PC-3 (cell line): ENCODE measurements at regions of chr2 and their contacts with region 1.

Region 1: DNA sequence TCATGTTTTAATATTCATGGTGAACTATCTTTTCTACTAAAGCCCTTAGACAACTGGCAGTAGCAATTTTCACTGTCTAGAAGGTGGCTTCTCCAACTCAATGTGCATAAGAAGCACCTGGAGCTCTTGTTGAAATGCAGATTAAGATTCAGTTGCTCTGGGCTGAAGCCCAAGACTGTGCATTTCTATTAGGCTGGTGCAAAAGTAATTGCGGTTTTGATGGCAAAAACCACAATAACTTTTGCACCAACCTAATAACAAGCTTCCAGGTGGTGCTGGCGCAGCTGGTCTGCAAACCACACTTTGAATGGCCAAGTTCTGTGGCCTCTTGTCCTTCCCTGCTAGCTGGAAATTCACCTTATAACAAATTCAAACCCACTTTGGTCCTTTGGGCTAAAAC is 26.7 kb upstream of the VPS54 start:
- DNase-seq: no peak
- ATAC-seq: no peak
- H3K4me3 ChIP-seq: no peak overlapping the region
- H3K27ac ChIP-seq: no peak overlapping the region
- H3K4me1 ChIP-seq: peaks cover 4% of the 10 kb centered on the region; the same call in 1 of the 2 replicates
- H3K27me3 ChIP-seq: no peaks in the 10 kb centered on the region
- CTCF ChIP-seq: no peak

Region 2: DNA sequence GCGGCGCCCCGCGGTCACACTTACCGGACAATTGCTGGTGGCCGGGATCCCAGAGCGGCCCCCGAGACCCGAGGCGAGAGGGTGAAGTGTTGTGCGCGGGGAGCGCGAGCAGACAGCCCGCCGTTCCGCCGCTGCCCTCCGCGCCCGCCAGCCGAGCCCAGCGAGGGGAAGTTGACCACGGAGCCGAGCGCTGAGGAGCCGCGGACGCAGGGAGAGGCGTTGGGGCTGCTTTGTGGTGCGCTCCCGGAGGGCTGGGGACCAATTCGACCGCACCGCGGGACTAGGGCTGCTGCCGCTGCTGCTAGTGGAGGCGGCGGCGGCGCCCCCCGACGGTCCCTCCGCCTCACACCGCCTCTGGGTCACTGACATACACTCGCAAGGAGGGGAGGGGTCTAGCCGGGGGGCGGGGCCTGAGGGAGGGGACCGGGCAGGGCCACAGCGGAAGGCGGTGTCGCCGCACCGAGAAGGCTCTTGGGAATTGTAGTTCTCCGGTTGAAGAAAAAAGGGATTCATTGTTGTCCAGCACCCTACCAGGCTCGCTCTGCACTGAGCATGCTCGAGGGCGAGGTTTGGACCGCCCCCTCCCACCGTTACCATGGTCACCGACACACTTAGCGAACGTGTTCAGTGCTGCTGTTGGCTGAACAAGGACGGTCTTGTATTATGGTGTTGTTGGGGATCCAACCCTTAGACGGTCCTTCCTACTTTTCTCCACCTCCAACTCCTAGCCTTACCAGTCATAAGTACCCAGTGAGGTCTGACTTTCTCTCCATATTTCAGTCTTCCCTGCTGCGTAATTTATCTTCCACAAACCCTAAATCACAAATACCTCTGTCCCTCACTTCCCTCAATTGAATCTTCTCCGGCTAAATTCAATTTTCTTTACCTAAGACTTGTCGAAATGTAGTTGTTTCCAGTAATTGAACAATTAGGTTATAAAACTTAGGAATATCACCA is 98.4 kb after region 1 on chr2 and contains the start of gene PELI1:
- CTCF ChIA-PET with region 1: no interaction called
- POLR2A ChIA-PET with region 1: no interaction called
- intact Hi-C with region 1: loop called (anchors 5 kb)
- DNase-seq: peak; percentile 97
- ATAC-seq: peak; percentile 89
- H3K4me3 ChIP-seq: peak within 1 kb of the TSS; percentile 90
- H3K27ac ChIP-seq: no peak within 1 kb of the TSS
- H3K4me1 ChIP-seq: peaks cover 18% of the 10 kb centered on the region; the same call in 1 of the 2 replicates
- H3K27me3 ChIP-seq: no peaks in the 10 kb centered on the region
- CTCF ChIP-seq: peak; percentile 21; the same call in 1 of the 2 replicates
- total RNA-seq, gene PELI1: 5.6 and 10.4 TPM in 2 replicates

Region 3: DNA sequence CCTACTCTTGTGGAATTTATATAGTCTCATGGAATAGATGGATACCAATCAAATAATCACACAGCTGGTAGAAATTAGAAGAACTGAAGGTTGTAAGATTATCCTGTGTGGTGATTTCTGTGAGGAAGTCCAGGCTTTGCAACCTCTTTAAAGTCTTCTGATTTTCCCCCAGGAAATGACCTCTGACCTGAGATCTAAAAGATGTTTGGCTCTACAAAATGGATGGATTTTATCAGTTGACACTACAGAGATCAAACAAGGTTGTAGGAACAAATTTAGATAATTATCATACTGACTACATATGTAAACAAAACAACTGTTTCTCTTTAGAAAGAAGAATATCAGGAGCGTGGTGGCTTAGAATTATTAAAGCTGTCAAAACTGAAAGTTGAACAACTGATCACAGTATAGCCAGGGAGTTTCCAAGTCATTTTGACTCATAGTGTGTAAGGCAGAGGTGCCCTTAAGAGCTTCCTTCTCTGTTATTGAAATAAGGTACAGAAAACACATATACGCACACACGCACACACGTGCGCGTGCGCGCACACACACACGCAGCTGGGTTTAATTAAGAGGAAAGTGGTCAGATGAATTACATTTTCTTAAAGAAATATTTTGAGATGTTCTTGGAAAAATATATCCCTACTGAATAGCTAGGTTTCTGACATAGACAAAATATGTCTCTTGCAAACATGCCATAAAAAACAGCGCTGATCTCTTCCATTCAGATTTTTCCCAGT is 133.8 kb after region 1 on chr2:
- CTCF ChIA-PET with region 1: no interaction called
- POLR2A ChIA-PET with region 1: no interaction called
- intact Hi-C with region 1: no loop called
- DNase-seq: no peak
- ATAC-seq: no peak
- H3K4me3 ChIP-seq: no peak overlapping the region
- H3K27ac ChIP-seq: no peak overlapping the region
- H3K4me1 ChIP-seq: no peaks in the 10 kb centered on the region
- H3K27me3 ChIP-seq: 0 out of 2 replicates have a peak, but pooled peaks cover 4% of the 10 kb centered on the region
- CTCF ChIP-seq: no peak

Region 4: DNA sequence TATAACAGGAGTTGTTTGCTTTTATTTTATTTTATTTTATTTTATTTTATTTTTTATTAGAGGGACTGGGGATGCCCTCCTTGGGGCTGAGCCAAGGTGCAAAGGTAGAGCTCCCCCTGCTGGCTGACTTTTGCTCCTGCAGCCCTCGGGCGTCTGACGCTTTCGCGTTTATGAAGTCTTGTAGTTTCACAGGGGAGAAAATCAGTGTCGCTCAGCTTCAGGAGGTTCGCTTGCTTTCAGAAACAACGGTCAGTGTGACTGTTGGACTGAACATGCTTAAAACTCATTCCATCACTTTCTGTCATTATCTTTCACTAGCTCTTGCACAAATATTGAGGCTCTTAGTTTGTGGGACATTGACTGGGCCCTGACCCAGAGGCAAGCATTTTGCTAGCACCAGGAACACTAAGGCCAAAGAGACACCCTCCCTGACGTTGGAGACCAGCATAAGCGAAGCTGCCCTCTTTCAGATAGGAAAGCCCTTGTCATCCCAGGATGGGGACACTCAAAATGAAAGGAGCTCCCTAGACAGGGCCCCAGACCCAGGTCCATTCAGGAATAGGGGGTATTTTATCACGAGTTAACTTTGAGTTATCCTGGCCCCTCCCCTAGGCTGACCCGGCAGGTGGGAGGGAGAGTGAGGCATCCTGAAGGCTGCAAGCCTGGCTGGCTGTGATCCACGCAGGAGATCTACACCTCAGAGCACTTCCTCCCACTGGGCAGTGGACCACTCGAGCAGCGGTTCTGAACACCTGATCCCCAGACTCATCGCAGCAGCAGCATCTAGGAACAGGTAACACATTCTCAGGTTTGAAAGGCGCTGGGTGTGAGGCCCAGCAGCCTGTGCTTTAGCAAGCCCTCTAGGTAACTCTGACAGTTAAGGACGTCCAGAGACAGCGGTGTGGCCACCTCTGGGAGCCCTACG is 442.4 kb after region 1 on chr2:
- CTCF ChIA-PET with region 1: no interaction called
- POLR2A ChIA-PET with region 1: no interaction called
- intact Hi-C with region 1: loop called (anchors 5 kb)
- DNase-seq: peak; percentile 83
- ATAC-seq: peak; percentile 64
- H3K4me3 ChIP-seq: no peak overlapping the region
- H3K27ac ChIP-seq: no peak overlapping the region
- H3K4me1 ChIP-seq: peaks cover 10% of the 10 kb centered on the region; the same call in 1 of the 2 replicates
- H3K27me3 ChIP-seq: no peaks in the 10 kb centered on the region
- CTCF ChIP-seq: peak; percentile 73

Region 5: DNA sequence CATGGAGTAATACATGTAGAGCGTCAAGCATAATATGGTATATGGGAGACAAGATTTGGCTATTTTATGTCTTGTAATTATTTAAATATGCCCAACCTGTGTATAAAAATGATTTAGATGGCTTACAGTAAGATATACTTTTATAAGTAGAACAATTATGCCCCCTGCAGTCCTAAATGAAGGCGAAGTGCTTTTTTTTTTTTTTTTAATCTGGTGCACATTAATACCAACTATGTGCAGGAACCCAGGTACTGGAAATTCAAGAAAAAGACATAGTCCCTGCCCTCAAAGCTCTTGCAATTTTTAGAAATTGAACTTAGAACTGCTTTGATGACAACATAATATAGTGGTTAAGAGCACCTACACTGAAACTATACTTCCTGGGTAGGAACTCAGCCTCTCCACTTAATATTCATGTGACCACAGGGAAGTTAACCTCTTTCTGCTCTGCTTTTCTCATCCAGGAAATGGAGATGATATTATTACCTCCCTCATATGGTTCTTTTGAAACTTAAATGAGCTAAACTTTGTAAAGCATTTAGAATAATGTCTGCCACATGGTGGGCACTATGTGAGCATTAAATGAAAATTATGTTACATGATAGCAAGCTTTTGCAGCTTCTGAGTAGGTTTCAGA is 516.3 kb after region 1 on chr2:
- CTCF ChIA-PET with region 1: no interaction called
- POLR2A ChIA-PET with region 1: no interaction called
- intact Hi-C with region 1: loop called (anchors 5 kb)
- DNase-seq: peak; percentile 71
- ATAC-seq: peak; percentile 66
- H3K4me3 ChIP-seq: no peak overlapping the region
- H3K27ac ChIP-seq: no peak overlapping the region
- H3K4me1 ChIP-seq: no peaks in the 10 kb centered on the region
- H3K27me3 ChIP-seq: no peaks in the 10 kb centered on the region
- CTCF ChIP-seq: peak; percentile 82

Region 6: DNA sequence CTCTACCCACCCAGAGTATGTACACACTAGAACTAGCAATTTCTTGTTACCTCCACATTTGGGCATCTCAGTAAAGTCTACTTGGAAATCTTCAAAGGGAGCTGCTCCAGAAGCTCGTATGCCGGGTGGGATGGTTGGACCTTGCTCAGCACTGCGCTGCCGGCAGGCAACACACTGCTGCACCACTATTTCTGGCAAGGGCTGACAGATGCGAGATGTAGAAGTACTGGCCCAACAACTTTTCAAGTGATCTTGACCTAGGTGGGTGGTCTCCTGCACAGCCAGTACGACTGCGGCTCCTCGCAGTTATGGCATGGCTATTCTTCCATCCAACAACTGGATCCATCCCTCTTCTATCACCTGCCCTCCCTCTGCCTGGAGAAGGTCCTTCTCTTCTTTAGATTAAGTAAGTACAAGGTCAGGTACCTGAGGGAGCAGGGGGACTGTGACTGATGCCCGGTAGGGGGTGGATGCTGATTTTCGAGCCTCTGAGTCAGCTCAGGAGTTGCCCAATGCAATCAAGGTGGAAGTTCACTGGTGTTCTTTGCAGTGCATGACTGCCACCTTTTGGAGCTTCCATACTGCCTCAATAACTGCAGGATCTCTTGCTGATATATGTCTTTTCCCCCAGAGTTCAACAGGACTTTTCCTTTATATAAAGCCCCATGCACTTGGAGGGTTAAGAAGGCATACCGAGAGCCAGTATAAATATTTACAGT is 842.8 kb after region 1 on chr2:
- CTCF ChIA-PET with region 1: no interaction called
- POLR2A ChIA-PET with region 1: no interaction called
- intact Hi-C with region 1: loop called (anchors 5 kb)
- DNase-seq: peak; percentile 96
- ATAC-seq: peak; percentile 98
- H3K4me3 ChIP-seq: no peak overlapping the region
- H3K27ac ChIP-seq: no peak overlapping the region
- H3K4me1 ChIP-seq: peaks cover 11% of the 10 kb centered on the region
- H3K27me3 ChIP-seq: no peaks in the 10 kb centered on the region
- CTCF ChIP-seq: peak; percentile 89